Esophagus muscularis mucosa (tissue), 4 donors: ENCODE measurements at regions of chr1 and their contacts with region 1.

Region 1: DNA sequence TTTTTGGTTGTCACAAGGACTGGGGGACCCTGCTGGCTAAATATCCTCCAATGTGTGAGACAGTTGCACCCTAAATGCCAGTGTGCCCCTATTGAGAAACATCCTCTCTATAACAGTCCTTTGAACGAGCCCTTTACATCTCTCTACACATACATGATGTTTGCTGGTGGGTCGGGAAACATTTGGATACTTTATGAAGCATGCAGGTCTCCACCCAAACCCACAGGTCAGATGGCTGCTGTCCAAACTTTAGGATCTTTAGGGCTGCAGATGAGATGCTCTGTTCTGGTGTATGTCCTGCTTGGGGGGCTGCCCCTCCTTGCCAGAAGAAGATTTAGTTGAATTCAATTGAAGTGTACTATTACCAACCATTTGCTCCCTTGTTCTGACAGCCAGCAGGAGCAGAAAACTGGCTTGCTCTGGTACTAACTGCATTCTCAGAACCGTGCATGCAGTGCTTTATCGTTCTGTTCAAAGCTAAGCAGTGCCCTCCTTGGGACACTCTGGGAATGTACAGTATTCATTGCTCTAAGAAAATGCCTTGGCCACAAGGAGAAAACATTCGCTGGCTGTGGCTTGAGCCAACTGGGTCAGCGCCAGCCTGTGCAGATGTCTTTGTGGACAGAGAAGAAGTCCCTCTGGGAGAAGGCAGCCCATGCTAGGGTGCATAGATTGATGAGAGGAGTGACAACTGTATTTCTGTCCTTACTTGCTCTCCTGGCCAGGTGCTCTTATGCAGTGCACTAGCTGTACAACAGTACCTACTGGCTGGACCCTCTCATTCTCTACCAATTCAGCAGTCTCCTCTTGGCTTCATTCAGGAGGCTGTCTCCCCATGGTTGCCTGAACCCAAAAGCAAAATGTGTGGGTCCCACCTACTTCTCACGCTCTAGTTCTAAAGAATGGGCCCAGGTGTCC is 61.4 kb upstream of the DIRAS3 start:
- DNase-seq: peak; percentile 92
- H3K4me3 ChIP-seq: no peak overlapping the region
- H3K27ac ChIP-seq: peak overlapping the region in 3 of 4 donors; percentile 24 to 53 (median 49)
- H3K4me1 ChIP-seq: peaks cover 16 to 34% (median 27%) of the 10 kb centered on the region in 4 donors
- H3K27me3 ChIP-seq: no peaks in the 10 kb centered on the region
- CTCF ChIP-seq: peak; percentile 64 to 81 (median 70)
- EP300 ChIP-seq: no peak
- POLR2A ChIP-seq: no peak

Region 2: DNA sequence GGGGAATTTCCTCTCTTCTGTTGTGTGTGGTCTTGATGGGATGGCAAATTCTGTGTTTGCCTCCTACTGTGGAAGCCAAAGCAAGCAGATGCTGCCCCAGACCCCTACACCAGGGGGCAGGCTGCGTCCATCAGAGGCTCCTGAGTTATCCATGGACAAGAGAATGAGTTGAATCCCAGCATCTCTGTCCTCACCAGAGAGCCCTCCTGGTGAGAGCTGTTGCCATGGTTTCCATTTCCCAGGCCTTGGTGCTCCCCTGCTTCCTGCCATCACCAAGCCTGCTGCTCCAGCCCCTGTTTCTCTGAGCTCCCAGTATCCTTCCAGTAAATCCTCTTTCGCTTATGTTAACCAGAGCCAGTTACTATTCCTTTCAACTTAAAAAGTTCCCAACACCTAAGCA is 258.1 kb before region 1 on chr1:
- intact Hi-C with region 1: loop called (anchors 2 kb)
- DNase-seq: no peak
- H3K4me3 ChIP-seq: no peak overlapping the region
- H3K27ac ChIP-seq: no peak overlapping the region
- H3K4me1 ChIP-seq: peaks cover 8 to 27% (median 17%) of the 10 kb centered on the region in 4 donors
- H3K27me3 ChIP-seq: no peaks in the 10 kb centered on the region
- CTCF ChIP-seq: peak; percentile 54 to 70 (median 56)
- EP300 ChIP-seq: no peak
- POLR2A ChIP-seq: no peak

Region 3: DNA sequence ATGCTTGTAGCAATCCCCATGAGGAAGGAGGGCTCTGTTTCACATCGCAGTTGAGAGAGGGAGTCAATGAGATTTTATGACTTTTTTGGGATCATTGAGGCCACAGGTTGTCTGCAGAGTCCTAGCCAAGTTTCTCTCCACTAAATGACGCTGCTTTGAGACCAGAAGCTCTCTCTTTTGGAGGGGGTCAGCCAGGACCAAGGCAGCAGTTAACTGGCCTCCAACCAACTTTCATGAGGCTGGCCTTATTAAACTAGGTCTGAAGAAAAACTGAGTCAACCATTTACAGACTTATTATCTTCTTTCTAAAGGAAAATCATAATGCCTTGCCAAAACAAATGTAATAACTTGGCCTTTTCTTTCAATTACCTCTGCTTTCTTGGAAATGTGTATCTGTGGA is 111.9 kb after region 1 on chr1:
- intact Hi-C with region 1: loop called (anchors 1 kb)
- DNase-seq: no peak
- H3K4me3 ChIP-seq: no peak overlapping the region
- H3K27ac ChIP-seq: peak overlapping the region; percentile 50 to 97 (median 66)
- H3K4me1 ChIP-seq: peaks cover 10 to 98% (median 85%) of the 10 kb centered on the region in 4 donors
- H3K27me3 ChIP-seq: no peaks in the 10 kb centered on the region
- CTCF ChIP-seq: no peak
- EP300 ChIP-seq: no peak
- POLR2A ChIP-seq: no peak